CD4-positive, alpha-beta memory T cell (primary cell): ENCODE measurements at regions of chr9 and their contacts with region 1.

Region 1: GRCh38 chr9:98848450-98849149 is 41.1 kb downstream of the GALNT12 start:
- DNase-seq: peak; percentile 51 to 61 (median 58)
- H3K4me3 ChIP-seq: no peak overlapping the region
- H3K4me3 Mint-ChIP-seq: no peak overlapping the region
- H3K27ac ChIP-seq: no peak overlapping the region
- H3K27ac Mint-ChIP-seq: peak overlapping the region in 3 of 7 donors; percentile 38 to 66 (median 63)
- H3K4me1 ChIP-seq: no peaks in the 10 kb centered on the region
- H3K4me1 Mint-ChIP-seq: peaks cover 0 to 8% (median 2%) of the 10 kb centered on the region in 4 donors
- H3K27me3 ChIP-seq: no peaks in the 10 kb centered on the region
- H3K27me3 Mint-ChIP-seq: no peaks in the 10 kb centered on the region

Region 2: GRCh38 chr9:98644011-98644410 is 204.6 kb before region 1 on chr9:
- CTCF ChIA-PET with region 1: no interaction called
- POLR2A ChIA-PET with region 1: no interaction called
- intact Hi-C with region 1: no loop called
- DNase-seq: no peak
- H3K4me3 ChIP-seq: no peak overlapping the region
- H3K4me3 Mint-ChIP-seq: no peak overlapping the region
- H3K27ac ChIP-seq: no peak overlapping the region
- H3K27ac Mint-ChIP-seq: no peak overlapping the region
- H3K4me1 ChIP-seq: no peaks in the 10 kb centered on the region
- H3K4me1 Mint-ChIP-seq: no peaks in the 10 kb centered on the region
- H3K27me3 ChIP-seq: peaks cover 7% of the 10 kb centered on the region
- H3K27me3 Mint-ChIP-seq: peaks cover 10 to 15% of the 10 kb centered on the region in 2 donors

Region 3: GRCh38 chr9:98807070-98807810 is 41.4 kb before region 1 on chr9 and contains the start of gene GALNT12:
- CTCF ChIA-PET with region 1: interaction called, 12 read pairs
- POLR2A ChIA-PET with region 1: no interaction called
- intact Hi-C with region 1: no loop called
- DNase-seq: peak; percentile 37 to 52 (median 46)
- H3K4me3 ChIP-seq: peak within 1 kb of the TSS in 1 of 2 donors; percentile 39
- H3K4me3 Mint-ChIP-seq: peak within 1 kb of the TSS; percentile 88 to 93 (median 89)
- H3K27ac ChIP-seq: no peak within 1 kb of the TSS
- H3K27ac Mint-ChIP-seq: peak within 1 kb of the TSS in 5 of 7 donors; percentile 42 to 76 (median 59)
- H3K4me1 ChIP-seq: peaks cover 17% of the 10 kb centered on the region
- H3K4me1 Mint-ChIP-seq: peaks cover 16 to 29% (median 26%) of the 10 kb centered on the region in 4 donors
- H3K27me3 ChIP-seq: no peaks in the 10 kb centered on the region
- H3K27me3 Mint-ChIP-seq: peaks cover 3 to 4% of the 10 kb centered on the region in 2 donors
- total RNA-seq, gene GALNT12: 11.1 to 13.8 TPM

Region 4: GRCh38 chr9:98838155-98838867 is 10.3 kb before region 1 on chr9:
- CTCF ChIA-PET with region 1: interaction called, 11 read pairs
- POLR2A ChIA-PET with region 1: no interaction called
- intact Hi-C with region 1: no loop called
- DNase-seq: no peak
- H3K4me3 ChIP-seq: no peak overlapping the region
- H3K4me3 Mint-ChIP-seq: no peak overlapping the region
- H3K27ac ChIP-seq: no peak overlapping the region
- H3K27ac Mint-ChIP-seq: peak overlapping the region in 1 of 7 donors; percentile 77
- H3K4me1 ChIP-seq: no peaks in the 10 kb centered on the region
- H3K4me1 Mint-ChIP-seq: no peaks in the 10 kb centered on the region
- H3K27me3 ChIP-seq: no peaks in the 10 kb centered on the region
- H3K27me3 Mint-ChIP-seq: no peaks in the 10 kb centered on the region

Region 5: GRCh38 chr9:98860871-98861293 is 12.3 kb after region 1 on chr9:
- CTCF ChIA-PET with region 1: interaction called, 13 read pairs
- POLR2A ChIA-PET with region 1: no interaction called
- intact Hi-C with region 1: no loop called
- DNase-seq: no peak
- H3K4me3 ChIP-seq: no peak overlapping the region
- H3K4me3 Mint-ChIP-seq: no peak overlapping the region
- H3K27ac ChIP-seq: no peak overlapping the region
- H3K27ac Mint-ChIP-seq: no peak overlapping the region
- H3K4me1 ChIP-seq: no peaks in the 10 kb centered on the region
- H3K4me1 Mint-ChIP-seq: no peaks in the 10 kb centered on the region
- H3K27me3 ChIP-seq: no peaks in the 10 kb centered on the region
- H3K27me3 Mint-ChIP-seq: peaks cover 9 to 22% of the 10 kb centered on the region in 2 donors

Region 6: GRCh38 chr9:98974994-98975712 is 126.6 kb after region 1 on chr9:
- CTCF ChIA-PET with region 1: interaction called, 6 read pairs
- POLR2A ChIA-PET with region 1: no interaction called
- intact Hi-C with region 1: loop called (anchors 1 kb)
- DNase-seq: peak; percentile 61 to 74 (median 71)
- H3K4me3 ChIP-seq: peak overlapping the region in 1 of 2 donors; percentile 49
- H3K4me3 Mint-ChIP-seq: peak overlapping the region in 7 of 8 donors; percentile 30 to 62 (median 53)
- H3K27ac ChIP-seq: no peak overlapping the region
- H3K27ac Mint-ChIP-seq: no peak overlapping the region
- H3K4me1 ChIP-seq: peaks cover 10% of the 10 kb centered on the region
- H3K4me1 Mint-ChIP-seq: no peaks in the 10 kb centered on the region
- H3K27me3 ChIP-seq: no peaks in the 10 kb centered on the region
- H3K27me3 Mint-ChIP-seq: peaks cover 5% of the 10 kb centered on the region in 2 donors

Region 7: GRCh38 chr9:99140685-99141314 is 292.2 kb after region 1 on chr9:
- CTCF ChIA-PET with region 1: interaction called, 27 read pairs
- POLR2A ChIA-PET with region 1: no interaction called
- intact Hi-C with region 1: no loop called
- DNase-seq: peak; percentile 50 to 56 (median 53)
- H3K4me3 ChIP-seq: no peak overlapping the region
- H3K4me3 Mint-ChIP-seq: peak overlapping the region in 1 of 8 donors; percentile 21
- H3K27ac ChIP-seq: no peak overlapping the region
- H3K27ac Mint-ChIP-seq: peak overlapping the region; percentile 16 to 58 (median 43)
- H3K4me1 ChIP-seq: peaks cover 16% of the 10 kb centered on the region
- H3K4me1 Mint-ChIP-seq: peaks cover 21 to 31% (median 24%) of the 10 kb centered on the region in 4 donors
- H3K27me3 ChIP-seq: no peaks in the 10 kb centered on the region
- H3K27me3 Mint-ChIP-seq: no peaks in the 10 kb centered on the region